Stomach (tissue), 19 donors: ENCODE measurements at regions of chr10 and their contacts with region 1.

Region 1: GRCh38 chr10:992871-993270 is 4.6 kb downstream of the GTPBP4 start:
- DNase-seq: no peak
- H3K4me3 ChIP-seq: no peak overlapping the region
- H3K27ac ChIP-seq: no peak overlapping the region
- H3K4me1 ChIP-seq: peaks cover 10 to 25% (median 17%) of the 10 kb centered on the region in 4 donors
- H3K27me3 ChIP-seq: no peaks in the 10 kb centered on the region
- CTCF ChIP-seq: no peak
- EP300 ChIP-seq: no peak
- POLR2A ChIP-seq: no peak

Region 2: GRCh38 chr10:929960-930624 is 62.8 kb before region 1 on chr10:
- intact Hi-C with region 1: loop called (anchors 10 kb)
- DNase-seq: peak in 1 of 2 donors; percentile 39
- H3K4me3 ChIP-seq: peak overlapping the region; percentile 76 to 92 (median 88)
- H3K27ac ChIP-seq: peak overlapping the region; percentile 95 to 100 (median 98)
- H3K4me1 ChIP-seq: peaks cover 30 to 66% (median 58%) of the 10 kb centered on the region in 4 donors
- H3K27me3 ChIP-seq: no peaks in the 10 kb centered on the region
- CTCF ChIP-seq: no peak
- EP300 ChIP-seq: no peak
- POLR2A ChIP-seq: no peak

Region 3: GRCh38 chr10:1048732-1049424 is 56.0 kb after region 1 on chr10 and contains the start of gene IDI1:
- intact Hi-C with region 1: loop called (anchors 10 kb)
- DNase-seq: peak; percentile 98 to 99
- H3K4me3 ChIP-seq: peak within 1 kb of the TSS; percentile 66 to 80 (median 74)
- H3K27ac ChIP-seq: peak within 1 kb of the TSS; percentile 90 to 100 (median 98)
- H3K4me1 ChIP-seq: peaks cover 18 to 77% (median 56%) of the 10 kb centered on the region in 4 donors
- H3K27me3 ChIP-seq: no peaks in the 10 kb centered on the region
- CTCF ChIP-seq: no peak
- EP300 ChIP-seq: no peak
- POLR2A ChIP-seq: peak in 2 of 4 donors; percentile 80 to 94
- total RNA-seq, gene IDI1: 18.4 to 79.1 (median 21.6) TPM